Mammary epithelial cell (primary cell): ENCODE measurements at regions of chr5 and their contacts with region 1.

Region 1: DNA sequence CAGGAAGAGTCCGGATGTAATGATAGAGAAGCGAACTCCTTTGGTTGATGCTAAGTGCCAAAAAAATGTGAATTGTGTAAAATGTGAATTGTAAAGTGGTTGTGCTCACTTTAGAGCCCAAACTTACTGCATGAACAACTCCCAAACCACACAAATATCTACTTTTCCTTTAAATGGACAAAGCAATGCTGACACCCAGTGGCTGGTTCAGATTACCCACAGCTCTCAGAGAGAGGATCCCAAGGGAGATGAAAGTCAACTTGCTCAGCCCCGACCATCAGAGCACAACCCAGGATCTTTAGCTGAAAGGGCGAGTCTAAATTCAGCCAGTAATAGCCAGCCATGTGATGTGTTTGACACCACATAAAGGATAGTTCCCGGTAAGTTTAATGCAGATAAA is 133.7 kb downstream of the NMUR2 start:
- DNase-seq: peak; percentile 28
- H3K4me3 ChIP-seq: no peak overlapping the region
- H3K27ac ChIP-seq: no peak overlapping the region
- H3K4me1 ChIP-seq: peaks cover 11% of the 10 kb centered on the region
- H3K27me3 ChIP-seq: no peaks in the 10 kb centered on the region
- CTCF ChIP-seq: peak; percentile 46 to 68

Region 2: GRCh38 chr5:151447174-151448037 is 824.0 kb before region 1 on chr5 and contains the start of gene SLC36A1:
- CTCF ChIA-PET with region 1: no interaction called
- dilution Hi-C with region 1: no loop called
- in situ Hi-C with region 1: no loop called
- intact Hi-C with region 1: loop called (anchors 5 kb)
- DNase-seq: peak; percentile 83
- H3K4me3 ChIP-seq: peak within 1 kb of the TSS; percentile 56 to 77 (median 77)
- H3K27ac ChIP-seq: peak within 1 kb of the TSS; percentile 20
- H3K4me1 ChIP-seq: peaks cover 13% of the 10 kb centered on the region
- H3K27me3 ChIP-seq: peaks cover 2% of the 10 kb centered on the region
- CTCF ChIP-seq: peak; percentile 93 to 94
- total RNA-seq, gene SLC36A1: 9.7 to 11.0 TPM

Region 3: GRCh38 chr5:151771259-151772028 is 500.0 kb before region 1 on chr5 and contains the start of gene G3BP1:
- CTCF ChIA-PET with region 1: no interaction called
- dilution Hi-C with region 1: no loop called
- in situ Hi-C with region 1: no loop called
- intact Hi-C with region 1: loop called (anchors 2 kb)
- DNase-seq: peak; percentile 100
- H3K4me3 ChIP-seq: peak within 1 kb of the TSS; percentile 63 to 93 (median 80)
- H3K27ac ChIP-seq: peak within 1 kb of the TSS; percentile 84
- H3K4me1 ChIP-seq: peaks cover 26% of the 10 kb centered on the region
- H3K27me3 ChIP-seq: no peaks in the 10 kb centered on the region
- CTCF ChIP-seq: peak; percentile 36 to 77
- total RNA-seq, gene G3BP1: 193 to 252 TPM

Region 4: DNA sequence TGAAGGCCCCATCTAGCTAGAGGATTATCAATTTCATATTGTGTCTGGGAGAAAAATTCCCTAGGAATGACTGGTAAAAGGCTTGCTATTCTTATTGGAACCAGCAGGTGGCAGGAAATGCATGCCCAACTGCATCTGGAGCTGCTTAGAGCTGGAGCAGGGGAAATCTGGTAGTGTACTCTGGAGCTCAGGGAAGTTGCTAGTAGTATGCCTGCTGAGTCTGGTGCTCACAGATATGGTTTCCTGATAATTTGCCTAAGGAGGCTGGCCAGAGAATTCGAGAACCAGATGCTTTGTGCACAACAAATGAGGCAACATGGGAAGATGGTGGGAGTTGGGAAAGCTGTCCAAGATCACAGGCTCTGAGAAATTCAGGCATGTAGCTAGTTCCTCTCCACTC is 446.0 kb before region 1 on chr5:
- CTCF ChIA-PET with region 1: interaction called, 10 read pairs
- dilution Hi-C with region 1: no loop called
- in situ Hi-C with region 1: loop called in 1 of 2 experiments (anchors 25 kb)
- intact Hi-C with region 1: loop called (anchors 1 kb)
- DNase-seq: peak; percentile 44
- H3K4me3 ChIP-seq: no peak overlapping the region
- H3K27ac ChIP-seq: no peak overlapping the region
- H3K4me1 ChIP-seq: no peaks in the 10 kb centered on the region
- H3K27me3 ChIP-seq: no peaks in the 10 kb centered on the region
- CTCF ChIP-seq: peak; percentile 87

Region 5: GRCh38 chr5:151924564-151925301 is 346.7 kb before region 1 on chr5 and contains the start of gene GLRA1:
- CTCF ChIA-PET with region 1: no interaction called
- dilution Hi-C with region 1: no loop called
- in situ Hi-C with region 1: no loop called
- intact Hi-C with region 1: loop called (anchors 5 kb)
- DNase-seq: peak; percentile 25
- H3K4me3 ChIP-seq: no peak within 1 kb of the TSS
- H3K27ac ChIP-seq: no peak within 1 kb of the TSS
- H3K4me1 ChIP-seq: no peaks in the 10 kb centered on the region
- H3K27me3 ChIP-seq: no peaks in the 10 kb centered on the region
- CTCF ChIP-seq: no peak
- total RNA-seq, gene GLRA1: not detected

Region 6: GRCh38 chr5:152142840-152143469 is 128.5 kb before region 1 on chr5:
- CTCF ChIA-PET with region 1: no interaction called
- dilution Hi-C with region 1: no loop called
- in situ Hi-C with region 1: no loop called
- intact Hi-C with region 1: loop called (anchors 1 kb)
- DNase-seq: peak; percentile 21
- H3K4me3 ChIP-seq: no peak overlapping the region
- H3K27ac ChIP-seq: no peak overlapping the region
- H3K4me1 ChIP-seq: no peaks in the 10 kb centered on the region
- H3K27me3 ChIP-seq: no peaks in the 10 kb centered on the region
- CTCF ChIP-seq: peak; percentile 86 to 95

Region 7: GRCh38 chr5:152505442-152506042 is 234.1 kb after region 1 on chr5:
- CTCF ChIA-PET with region 1: no interaction called
- dilution Hi-C with region 1: no loop called
- in situ Hi-C with region 1: no loop called
- intact Hi-C with region 1: loop called (anchors 5 kb)
- DNase-seq: peak; percentile 51
- H3K4me3 ChIP-seq: no peak overlapping the region
- H3K27ac ChIP-seq: no peak overlapping the region
- H3K4me1 ChIP-seq: no peaks in the 10 kb centered on the region
- H3K27me3 ChIP-seq: no peaks in the 10 kb centered on the region
- CTCF ChIP-seq: peak; percentile 56 to 67